Activated CD4-positive, alpha-beta memory T cell treated with anti-CD3 and anti-CD28 coated beads for 36 hours (primary cell): ENCODE measurements at regions of chr15 and their contacts with region 1.

Region 1: DNA sequence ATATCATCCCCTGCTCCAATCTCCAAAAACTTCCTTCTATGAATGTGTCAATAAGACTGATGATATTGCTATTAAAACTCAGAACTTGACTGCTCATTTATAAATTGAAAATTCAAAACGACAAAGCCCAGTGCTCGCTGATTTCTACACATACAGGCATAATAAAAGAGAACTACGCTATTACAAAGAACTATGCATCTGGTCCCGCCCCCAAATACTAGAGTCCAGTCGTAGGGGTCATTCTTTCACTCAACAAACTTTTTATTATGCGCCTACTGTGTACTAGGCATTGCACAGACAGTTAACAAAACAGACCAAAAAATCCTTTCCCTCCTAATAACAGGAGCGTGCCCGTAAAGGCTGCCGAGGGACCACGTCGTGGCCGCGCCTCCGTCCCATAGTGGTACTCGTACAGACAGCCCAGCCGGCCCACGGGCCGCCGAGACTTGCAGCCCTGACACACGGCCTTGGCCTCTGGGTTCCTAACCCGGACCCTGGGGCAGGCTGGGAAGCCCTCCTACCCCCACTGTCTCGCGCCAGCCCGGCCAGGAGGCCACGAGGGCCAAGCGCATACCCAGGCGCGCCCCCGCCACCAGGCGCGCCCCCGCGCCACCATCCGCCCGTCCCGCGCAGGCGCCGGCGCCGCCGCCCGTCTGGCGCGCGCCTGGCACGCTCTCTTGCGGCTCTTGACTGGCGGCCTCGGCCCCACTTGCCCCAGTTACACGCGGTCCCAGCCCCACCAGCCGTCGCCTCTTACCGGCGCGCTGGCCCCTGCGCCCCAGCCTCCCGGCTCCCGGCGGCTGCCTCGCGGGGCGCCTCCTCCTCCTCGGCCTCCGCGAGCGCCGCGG is 757 bp downstream of the AVEN start:
- DNase-seq: peak; percentile 79
- H3K4me3 Mint-ChIP-seq: peak overlapping the region; percentile 85
- H3K27ac Mint-ChIP-seq: peak overlapping the region; percentile 90
- H3K4me1 Mint-ChIP-seq: peaks cover 25% of the 10 kb centered on the region
- H3K27me3 Mint-ChIP-seq: no peaks in the 10 kb centered on the region

Region 2: DNA sequence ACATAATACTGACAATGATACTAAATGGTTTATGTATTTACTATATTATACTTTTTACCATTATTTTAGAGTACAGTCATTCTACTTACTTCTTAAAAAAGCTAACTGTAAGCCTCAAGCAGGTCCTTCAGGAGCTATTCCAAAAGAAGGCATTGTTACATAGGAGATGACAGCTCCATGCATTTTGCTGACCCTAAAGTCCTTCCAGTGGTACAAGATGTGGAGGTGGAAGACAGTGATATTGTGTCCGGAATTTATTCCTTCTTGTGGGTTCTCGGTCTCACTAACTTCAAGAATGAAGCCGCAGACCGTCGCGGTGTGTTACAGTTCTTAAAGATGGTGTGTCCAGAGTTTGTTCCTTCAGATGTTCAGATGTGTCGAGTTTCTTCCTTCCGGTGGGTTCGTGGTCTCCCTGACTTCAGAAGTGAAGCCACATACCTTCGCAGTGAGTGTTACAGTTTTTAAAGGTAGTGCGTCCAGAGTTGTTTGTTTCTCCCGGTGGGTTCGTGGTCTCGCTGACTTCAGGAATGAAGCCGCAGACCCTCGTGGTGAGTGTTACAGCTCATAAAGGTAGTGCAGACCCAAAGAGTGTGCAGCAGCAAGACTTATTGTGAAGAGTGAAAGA is 20.1 kb before region 1 on chr15:
- CTCF ChIA-PET with region 1: no interaction called
- POLR2A ChIA-PET with region 1: interaction called, 9 read pairs
- intact Hi-C with region 1: loop called (anchors 1 kb)
- DNase-seq: peak; percentile 60
- H3K4me3 Mint-ChIP-seq: peak overlapping the region; percentile 37
- H3K27ac Mint-ChIP-seq: peak overlapping the region; percentile 24
- H3K4me1 Mint-ChIP-seq: peaks cover 13% of the 10 kb centered on the region
- H3K27me3 Mint-ChIP-seq: no peaks in the 10 kb centered on the region

Region 3: GRCh38 chr15:34055853-34056595 is 17.8 kb after region 1 on chr15:
- CTCF ChIA-PET with region 1: interaction called, 13 read pairs
- POLR2A ChIA-PET with region 1: no interaction called
- intact Hi-C with region 1: no loop called
- DNase-seq: no peak
- H3K4me3 Mint-ChIP-seq: no peak overlapping the region
- H3K27ac Mint-ChIP-seq: no peak overlapping the region
- H3K4me1 Mint-ChIP-seq: no peaks in the 10 kb centered on the region
- H3K27me3 Mint-ChIP-seq: no peaks in the 10 kb centered on the region

Region 4: GRCh38 chr15:34101366-34102175 is 63.3 kb after region 1 on chr15 and contains the starts of genes EMC7 and PGBD4:
- CTCF ChIA-PET with region 1: interaction called, 4 read pairs
- POLR2A ChIA-PET with region 1: interaction called, 9 read pairs
- intact Hi-C with region 1: loop called (anchors 1 kb)
- DNase-seq: peak; percentile 100
- H3K4me3 Mint-ChIP-seq: peak within 1 kb of the TSS; percentile 99
- H3K27ac Mint-ChIP-seq: peak within 1 kb of the TSS; percentile 96
- H3K4me1 Mint-ChIP-seq: peaks cover 36% of the 10 kb centered on the region
- H3K27me3 Mint-ChIP-seq: no peaks in the 10 kb centered on the region
- total RNA-seq, gene EMC7: 62.7 to 68.4 TPM
- total RNA-seq, gene PGBD4: 2.0 to 2.3 TPM

Region 5: DNA sequence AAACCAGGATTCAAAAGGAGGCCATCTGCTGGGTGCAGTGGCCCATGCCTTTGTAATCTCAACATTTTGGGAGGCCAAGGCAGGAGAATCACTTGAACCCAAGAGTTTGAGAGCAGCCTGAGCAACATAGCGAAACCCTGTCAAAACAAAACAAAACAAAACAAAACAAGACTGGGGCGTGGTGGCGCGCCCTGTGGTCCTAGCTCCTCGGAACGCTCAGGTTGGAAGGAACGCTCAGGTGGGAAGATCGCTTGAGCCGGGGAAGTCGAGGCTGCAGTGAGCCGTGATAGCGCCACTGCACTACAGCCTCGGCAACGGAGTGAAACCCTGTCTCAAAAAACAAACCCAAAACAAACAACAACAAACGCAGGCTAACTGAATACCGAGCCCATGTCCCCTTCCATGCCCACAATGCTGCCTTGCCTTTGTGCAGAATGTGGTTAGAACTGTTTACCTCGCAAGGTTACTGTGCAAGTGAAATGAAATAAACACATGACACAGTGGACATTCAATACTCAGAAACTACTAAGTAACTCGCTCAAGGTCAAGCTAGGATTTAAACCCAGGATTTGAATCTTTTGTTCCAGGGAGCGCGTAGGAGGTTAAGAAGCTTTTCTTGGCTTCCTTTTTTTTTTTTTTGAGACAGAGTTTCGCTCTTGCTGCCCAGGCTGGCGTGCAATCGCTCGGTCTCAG is 185.8 kb after region 1 on chr15:
- CTCF ChIA-PET with region 1: no interaction called
- POLR2A ChIA-PET with region 1: no interaction called
- intact Hi-C with region 1: loop called (anchors 1 kb)
- DNase-seq: no peak
- H3K4me3 Mint-ChIP-seq: peak overlapping the region; percentile 98
- H3K27ac Mint-ChIP-seq: peak overlapping the region; percentile 98
- H3K4me1 Mint-ChIP-seq: peaks cover 27% of the 10 kb centered on the region
- H3K27me3 Mint-ChIP-seq: peaks cover 2% of the 10 kb centered on the region